BJ (cell line): ENCODE measurements at regions of chr19 and their contacts with region 1.

Region 1: DNA sequence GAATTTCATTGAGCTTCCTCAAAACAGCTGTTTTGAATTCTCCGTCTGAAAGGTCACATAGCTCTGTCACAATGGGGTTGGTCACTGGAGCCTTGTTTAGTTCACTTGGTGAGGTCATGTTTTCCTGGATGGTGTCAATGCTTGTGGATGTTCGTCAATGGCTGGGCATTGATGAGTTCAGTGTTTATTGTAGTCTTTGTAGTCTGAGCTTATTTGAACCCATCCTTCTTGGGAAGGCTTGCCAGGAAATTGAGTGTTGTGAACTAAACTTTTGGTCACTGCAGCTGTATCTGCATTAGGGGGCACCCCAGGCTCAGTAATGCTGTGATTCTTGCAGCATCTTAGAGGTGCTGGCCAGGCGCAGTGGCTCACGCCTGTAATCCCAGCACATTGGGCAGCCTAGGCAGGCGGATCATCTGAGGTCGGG is 22.0 kb downstream of the BLOC1S3 start:
- DNase-seq: no peak
- H3K4me3 ChIP-seq: no peak overlapping the region
- H3K27me3 ChIP-seq: no peaks in the 10 kb centered on the region
- CTCF ChIP-seq: peak; percentile 29; the same call in 1 of the 2 replicates

Region 2: DNA sequence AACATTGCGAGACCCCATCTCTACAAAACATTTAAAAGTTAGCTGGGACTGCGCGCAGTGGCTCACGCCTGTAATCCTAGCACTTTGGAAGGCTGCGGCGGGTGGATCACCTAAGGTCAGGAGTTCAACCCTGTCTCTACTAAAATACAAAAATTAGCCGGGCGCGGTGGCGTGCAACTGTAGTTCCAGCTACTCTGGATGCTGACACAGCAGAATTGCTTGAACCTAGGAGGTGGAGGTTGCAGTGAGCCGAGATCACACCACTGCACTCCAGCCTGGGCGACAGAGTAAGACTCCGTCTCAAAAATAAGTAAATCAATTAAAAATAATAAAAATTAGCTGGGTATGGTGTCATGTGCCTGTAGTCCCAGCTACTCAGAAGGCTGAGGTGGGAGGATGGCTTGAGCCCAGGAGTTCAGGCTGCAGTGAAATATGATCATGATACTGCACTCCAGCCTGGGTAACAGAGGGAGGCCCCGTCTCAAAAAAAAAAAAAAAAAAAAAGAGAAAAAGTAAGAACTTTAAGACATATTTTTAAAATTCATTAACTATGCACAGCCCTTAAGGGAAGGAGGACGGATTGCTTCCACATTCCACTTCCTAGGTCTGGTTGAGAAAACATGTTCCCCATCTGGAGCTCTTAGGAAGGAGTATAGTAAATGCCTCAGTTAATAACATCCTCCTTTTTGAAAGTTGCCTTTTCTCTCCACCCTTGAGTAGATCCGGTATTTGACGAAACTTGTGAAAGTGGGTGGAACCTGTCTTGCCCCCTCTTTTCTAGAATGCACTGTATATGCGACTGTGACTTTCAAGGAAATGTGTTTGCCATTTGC is 18.5 kb after region 1 on chr19:
- CTCF ChIA-PET with region 1: no interaction called
- POLR2A ChIA-PET with region 1: no interaction called
- DNase-seq: no peak
- H3K4me3 ChIP-seq: no peak overlapping the region
- H3K27me3 ChIP-seq: peaks cover 19% of the 10 kb centered on the region
- CTCF ChIP-seq: no peak

Region 3: DNA sequence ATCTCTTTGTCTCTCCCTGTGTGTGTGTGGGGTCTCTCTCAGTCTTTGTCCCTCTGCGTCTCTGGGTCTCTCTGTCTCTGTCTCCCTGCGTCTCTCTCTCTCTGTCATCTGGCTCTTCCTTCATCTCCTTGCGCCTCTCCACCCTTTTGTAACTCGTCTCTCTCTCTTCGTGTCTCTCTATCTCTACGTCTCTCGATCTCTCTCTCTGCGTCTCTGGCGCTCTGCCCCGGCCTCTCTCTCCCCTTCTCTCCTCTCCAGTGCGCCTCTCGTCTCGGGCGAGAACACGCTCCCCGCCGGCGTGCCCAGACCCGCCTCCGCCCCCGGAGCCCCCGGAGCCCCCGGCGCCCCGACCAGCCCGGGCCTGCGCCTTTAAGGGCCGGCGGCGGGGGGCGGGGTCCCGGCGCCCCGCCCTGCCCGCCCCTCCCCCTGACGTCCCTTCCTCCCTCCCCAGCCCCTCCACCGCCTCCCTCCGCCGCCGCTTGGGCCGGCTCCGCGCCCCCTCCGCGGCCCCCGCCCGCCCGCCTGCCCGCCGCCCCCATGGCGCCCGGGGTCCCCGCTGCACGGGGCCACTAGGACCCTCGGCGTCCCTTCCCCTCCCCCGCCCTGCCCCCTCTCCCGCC is 50.4 kb after region 1 on chr19 and contains the start of gene MARK4:
- CTCF ChIA-PET with region 1: interaction called, 15 read pairs
- POLR2A ChIA-PET with region 1: no interaction called
- DNase-seq: no peak
- H3K4me3 ChIP-seq: peak within 1 kb of the TSS; percentile 84
- H3K27me3 ChIP-seq: no peaks in the 10 kb centered on the region
- CTCF ChIP-seq: no peak
- polyA plus RNA-seq, gene MARK4: 10.9 and 17.1 TPM in 2 replicates

Region 4: GRCh38 chr19:45336696-45337251 is 136.2 kb after region 1 on chr19:
- CTCF ChIA-PET with region 1: interaction called, 12 read pairs
- POLR2A ChIA-PET with region 1: no interaction called
- DNase-seq: no peak
- H3K4me3 ChIP-seq: no peak overlapping the region
- H3K27me3 ChIP-seq: peaks cover 6% of the 10 kb centered on the region; the same call in 1 of the 2 replicates
- CTCF ChIP-seq: no peak